ENCODE measurements at regions of chr9 and their contacts with region 1.

Region 1: GRCh38 chr9:124940693-124941453 is at the start of gene GOLGA1:
- DNase-seq: peak; percentile 93
- H3K4me3 Mint-ChIP-seq: peak within 1 kb of the TSS; percentile 98
- H3K27ac Mint-ChIP-seq: peak within 1 kb of the TSS; percentile 98
- H3K4me1 Mint-ChIP-seq: peaks cover 22% of the 10 kb centered on the region
- H3K27me3 Mint-ChIP-seq: no peaks in the 10 kb centered on the region
- total RNA-seq, gene GOLGA1: 14.3 to 15.8 TPM

Region 2: GRCh38 chr9:124861342-124862229 is 79.3 kb before region 1 on chr9 and contains the starts of genes ARPC5L and RPL35:
- CTCF ChIA-PET with region 1: no interaction called
- intact Hi-C with region 1: loop called (anchors 2 kb)
- DNase-seq: peak; percentile 96
- H3K4me3 Mint-ChIP-seq: peak within 1 kb of the TSS; percentile 87
- H3K27ac Mint-ChIP-seq: peak within 1 kb of the TSS; percentile 95
- H3K4me1 Mint-ChIP-seq: peaks cover 46% of the 10 kb centered on the region
- H3K27me3 Mint-ChIP-seq: no peaks in the 10 kb centered on the region
- total RNA-seq, gene ARPC5L: 116 to 123 TPM
- total RNA-seq, gene RPL35: 2,701 to 2,729 TPM

Region 3: DNA sequence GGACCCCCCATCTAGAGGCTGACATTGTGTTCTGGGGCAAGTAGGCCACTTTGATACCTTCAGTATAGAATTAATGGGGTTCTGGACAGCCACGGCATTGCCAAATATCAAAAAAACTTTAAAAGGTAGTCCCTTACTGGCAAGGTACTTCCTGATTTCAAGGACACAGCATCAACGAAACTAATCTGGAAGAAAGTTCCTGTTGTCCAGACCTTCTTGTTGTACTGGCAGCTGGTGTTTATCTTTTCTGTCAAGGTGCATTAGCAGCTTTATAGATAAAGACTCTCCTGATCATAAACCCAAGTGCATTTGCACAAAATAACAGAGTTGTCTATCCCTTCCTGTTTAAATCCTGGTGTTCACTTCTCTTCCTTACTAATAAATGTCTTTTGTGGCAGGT is 23.7 kb after region 1 on chr9:
- CTCF ChIA-PET with region 1: interaction called, 3 read pairs
- intact Hi-C with region 1: loop called (anchors 1 kb)
- DNase-seq: no peak
- H3K4me3 Mint-ChIP-seq: no peak overlapping the region
- H3K27ac Mint-ChIP-seq: peak overlapping the region; percentile 90
- H3K4me1 Mint-ChIP-seq: peaks cover 34% of the 10 kb centered on the region
- H3K27me3 Mint-ChIP-seq: no peaks in the 10 kb centered on the region

Region 4: DNA sequence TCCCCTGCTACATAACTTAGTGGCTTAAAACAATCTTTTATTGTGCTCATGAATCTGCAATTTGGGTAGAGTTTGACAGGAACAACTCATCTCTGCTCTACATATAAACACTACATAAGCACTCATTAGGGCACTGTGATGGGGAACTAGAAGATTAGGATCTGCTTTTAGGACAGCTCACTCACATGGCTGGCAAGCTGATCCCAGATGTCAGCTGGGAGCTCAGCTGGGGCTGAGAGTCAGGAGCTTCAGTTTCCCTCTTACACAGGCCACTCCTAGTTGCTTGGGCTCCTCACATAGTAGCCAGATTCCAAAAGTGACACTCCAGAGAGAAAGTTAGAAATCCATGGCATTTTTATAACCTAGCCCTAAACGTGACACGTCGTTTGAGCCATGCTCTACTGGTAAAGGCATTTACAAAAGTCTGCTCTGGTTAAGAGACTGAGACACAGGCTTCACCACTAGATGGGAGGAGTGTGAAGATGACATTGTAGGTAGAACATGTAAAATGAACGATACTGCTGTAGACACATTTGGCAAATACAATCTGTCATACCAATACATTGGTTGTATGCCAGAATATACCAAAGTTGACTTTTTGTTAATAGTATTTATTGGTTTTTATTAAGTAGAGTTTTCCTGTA is 178.9 kb after region 1 on chr9:
- CTCF ChIA-PET with region 1: no interaction called
- intact Hi-C with region 1: loop called (anchors 5 kb)
- DNase-seq: peak; percentile 41
- H3K4me3 Mint-ChIP-seq: no peak overlapping the region
- H3K27ac Mint-ChIP-seq: no peak overlapping the region
- H3K4me1 Mint-ChIP-seq: peaks cover 39% of the 10 kb centered on the region
- H3K27me3 Mint-ChIP-seq: no peaks in the 10 kb centered on the region

Region 5: DNA sequence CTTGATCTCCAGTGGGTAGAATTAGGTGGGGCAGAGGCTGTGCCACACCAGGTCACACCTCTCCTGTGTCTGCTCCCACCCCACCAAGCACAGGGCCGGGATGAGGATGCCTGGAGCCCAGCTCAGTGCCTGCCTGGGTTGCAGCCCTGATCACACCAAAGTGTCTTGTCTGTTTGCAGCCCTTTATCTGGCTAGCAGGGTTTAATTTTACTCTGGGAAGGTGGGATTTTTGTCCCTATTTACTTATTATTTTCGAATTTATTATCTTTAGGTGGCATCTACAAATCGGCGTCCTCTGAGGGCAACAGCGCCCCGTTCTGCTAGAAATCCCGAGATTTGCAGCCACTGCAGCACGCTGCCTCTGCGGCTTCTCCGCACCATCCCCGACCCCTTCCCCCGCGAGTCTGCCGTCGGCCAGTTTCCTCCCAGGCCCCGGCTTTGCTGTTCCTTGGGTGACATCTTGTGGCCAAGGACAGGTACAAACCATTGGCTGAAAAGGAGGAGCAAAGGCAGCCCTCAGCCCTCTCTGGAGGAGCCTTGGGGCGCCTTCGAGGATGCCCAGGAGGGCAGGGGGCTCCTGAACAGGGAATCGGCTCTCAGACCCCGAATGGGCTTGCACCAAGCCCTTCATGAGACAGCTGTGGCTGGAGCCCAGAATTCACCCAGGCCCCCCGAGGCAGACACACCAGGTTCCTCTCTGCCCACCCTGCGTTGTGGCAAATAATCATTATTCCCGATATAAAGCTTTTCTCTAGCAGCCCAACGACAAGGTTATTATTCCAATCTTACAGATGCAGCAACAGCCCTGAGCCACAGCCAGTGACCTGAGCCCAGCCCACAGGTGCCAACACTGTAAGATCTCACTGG is 433.8 kb after region 1 on chr9:
- CTCF ChIA-PET with region 1: no interaction called
- intact Hi-C with region 1: loop called (anchors 10 kb)
- DNase-seq: peak; percentile 80
- H3K4me3 Mint-ChIP-seq: peak overlapping the region; percentile 58
- H3K27ac Mint-ChIP-seq: no peak overlapping the region
- H3K4me1 Mint-ChIP-seq: peaks cover 7% of the 10 kb centered on the region
- H3K27me3 Mint-ChIP-seq: peaks cover 3% of the 10 kb centered on the region

Measured in activated naive CD4-positive, alpha-beta T cell treated with anti-CD3 and anti-CD28 coated beads for 36 hours (primary cell).